CD4-positive, alpha-beta memory T cell (primary cell): ENCODE measurements at regions of chr22 and their contacts with region 1.

Region 1: GRCh38 chr22:50562523-50563412 is at the start of gene SYCE3:
- DNase-seq: peak; percentile 94 to 97 (median 95)
- H3K4me3 ChIP-seq: peak within 1 kb of the TSS; percentile 62 to 78
- H3K4me3 Mint-ChIP-seq: peak within 1 kb of the TSS; percentile 92 to 97 (median 95)
- H3K27ac ChIP-seq: peak within 1 kb of the TSS; percentile 55
- H3K27ac Mint-ChIP-seq: peak within 1 kb of the TSS; percentile 78 to 96 (median 91)
- H3K4me1 ChIP-seq: peaks cover 8% of the 10 kb centered on the region
- H3K4me1 Mint-ChIP-seq: peaks cover 13 to 25% (median 20%) of the 10 kb centered on the region in 4 donors
- H3K27me3 ChIP-seq: no peaks in the 10 kb centered on the region
- H3K27me3 Mint-ChIP-seq: peaks cover 0 to 2% of the 10 kb centered on the region in 2 donors
- total RNA-seq, gene SYCE3: not detected

Region 2: DNA sequence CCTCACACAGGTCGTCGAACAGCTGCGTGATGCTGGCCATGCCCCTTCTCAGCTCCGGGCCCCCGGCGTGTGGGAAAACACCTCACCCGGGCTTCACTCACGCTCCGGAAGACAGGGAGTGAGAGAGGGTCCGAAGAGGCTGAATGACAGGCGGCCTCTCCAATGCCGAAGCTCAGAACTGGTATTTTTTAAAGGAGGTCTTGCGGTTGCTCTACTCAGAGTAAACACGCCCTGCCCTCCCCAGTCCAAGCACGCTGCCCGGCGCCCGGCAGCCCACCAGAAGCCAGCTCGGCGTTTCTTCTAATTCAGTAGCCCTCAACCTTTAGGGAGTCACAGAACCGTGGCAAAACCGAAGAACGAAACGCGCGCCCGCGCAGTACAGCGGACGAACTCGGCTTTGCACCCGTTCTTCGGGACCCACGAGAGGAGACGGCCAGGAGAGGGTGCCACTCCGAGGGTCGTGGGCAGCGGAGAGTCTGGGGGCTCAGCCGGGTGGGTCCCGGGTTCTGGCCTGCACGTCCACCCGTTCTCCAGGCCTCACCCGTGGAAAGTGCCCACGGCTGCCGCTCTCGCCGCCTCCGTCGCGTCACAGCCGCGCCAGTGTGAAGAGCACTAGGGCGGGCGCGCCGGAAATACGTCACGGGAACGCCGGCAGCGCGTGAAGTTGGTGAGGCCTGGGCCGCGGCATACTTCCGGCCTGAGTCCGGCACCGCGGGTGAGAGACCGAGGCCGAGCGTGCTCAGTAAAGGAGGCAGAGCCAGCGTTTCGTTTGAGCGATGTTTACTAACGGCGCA is 318.2 kb before region 1 on chr22 and contains the start of gene TUBGCP6:
- CTCF ChIA-PET with region 1: no interaction called
- POLR2A ChIA-PET with region 1: interaction called, 3 read pairs
- intact Hi-C with region 1: loop called (anchors 1 kb)
- DNase-seq: peak; percentile 89 to 93 (median 91)
- H3K4me3 ChIP-seq: peak within 1 kb of the TSS; percentile 37 to 99
- H3K4me3 Mint-ChIP-seq: peak within 1 kb of the TSS; percentile 95 to 100 (median 98)
- H3K27ac ChIP-seq: peak within 1 kb of the TSS; percentile 98
- H3K27ac Mint-ChIP-seq: peak within 1 kb of the TSS; percentile 90 to 100 (median 99)
- H3K4me1 ChIP-seq: peaks cover 69% of the 10 kb centered on the region
- H3K4me1 Mint-ChIP-seq: peaks cover 23 to 64% (median 37%) of the 10 kb centered on the region in 4 donors
- H3K27me3 ChIP-seq: no peaks in the 10 kb centered on the region
- H3K27me3 Mint-ChIP-seq: no peaks in the 10 kb centered on the region
- total RNA-seq, gene TUBGCP6: 132 to 133 TPM

Region 3: GRCh38 chr22:50530877-50531545 is 31.8 kb before region 1 on chr22:
- CTCF ChIA-PET with region 1: interaction called, 33 read pairs
- POLR2A ChIA-PET with region 1: interaction called, 56 read pairs
- intact Hi-C with region 1: no loop called
- DNase-seq: peak; percentile 72 to 82 (median 77)
- H3K4me3 ChIP-seq: peak overlapping the region; percentile 76 to 94
- H3K4me3 Mint-ChIP-seq: peak overlapping the region; percentile 89 to 95 (median 92)
- H3K27ac ChIP-seq: peak overlapping the region; percentile 96
- H3K27ac Mint-ChIP-seq: peak overlapping the region; percentile 96 to 99 (median 97)
- H3K4me1 ChIP-seq: peaks cover 54% of the 10 kb centered on the region
- H3K4me1 Mint-ChIP-seq: peaks cover 15 to 54% (median 38%) of the 10 kb centered on the region in 4 donors
- H3K27me3 ChIP-seq: no peaks in the 10 kb centered on the region
- H3K27me3 Mint-ChIP-seq: no peaks in the 10 kb centered on the region

Region 4: DNA sequence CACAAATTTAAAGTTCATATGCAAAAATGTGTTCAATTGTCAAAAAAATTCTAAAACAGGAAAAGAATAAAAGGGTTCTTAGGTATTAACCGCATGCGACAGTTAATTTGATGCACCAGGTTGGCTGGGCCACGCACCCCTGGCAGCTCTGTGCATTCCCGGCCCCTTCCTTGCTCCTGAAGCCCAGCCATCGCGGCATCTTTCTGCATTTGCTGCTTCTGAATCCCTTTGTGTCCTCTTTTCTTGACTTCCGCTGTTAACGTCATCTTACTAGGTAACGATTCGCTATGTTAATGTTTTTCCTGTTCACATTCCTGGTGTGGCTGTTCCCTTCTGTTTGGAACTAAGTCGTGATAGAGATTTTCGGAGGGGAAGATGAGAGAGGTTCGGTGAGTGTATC is 25.0 kb before region 1 on chr22:
- CTCF ChIA-PET with region 1: interaction called, 9 read pairs
- POLR2A ChIA-PET with region 1: interaction called, 31 read pairs
- intact Hi-C with region 1: no loop called
- DNase-seq: no peak
- H3K4me3 ChIP-seq: no peak overlapping the region
- H3K4me3 Mint-ChIP-seq: peak overlapping the region in 6 of 8 donors; percentile 49 to 70 (median 60)
- H3K27ac ChIP-seq: peak overlapping the region; percentile 99
- H3K27ac Mint-ChIP-seq: peak overlapping the region; percentile 86 to 100 (median 96)
- H3K4me1 ChIP-seq: peaks cover 41% of the 10 kb centered on the region
- H3K4me1 Mint-ChIP-seq: peaks cover 25 to 61% (median 49%) of the 10 kb centered on the region in 4 donors
- H3K27me3 ChIP-seq: no peaks in the 10 kb centered on the region
- H3K27me3 Mint-ChIP-seq: no peaks in the 10 kb centered on the region

Region 5: DNA sequence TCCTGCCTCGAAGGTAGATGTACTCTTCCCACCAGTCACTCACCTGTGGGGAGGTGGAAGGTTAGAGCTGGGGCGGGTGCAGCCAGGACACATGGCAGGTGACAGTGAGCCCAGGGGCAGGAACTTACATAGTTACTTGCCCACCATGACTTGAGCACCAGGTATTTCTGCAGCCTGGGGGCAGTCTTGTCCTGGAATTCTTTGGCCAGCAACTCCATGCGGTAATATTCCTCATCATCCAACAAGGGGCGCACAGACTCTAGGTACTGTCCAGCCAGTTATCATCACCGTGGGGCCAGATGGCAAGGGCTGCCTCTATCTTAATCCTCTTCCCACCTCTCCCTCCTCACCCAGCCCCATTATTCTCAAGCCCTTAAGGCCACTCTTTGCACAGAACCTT is 13.3 kb after region 1 on chr22:
- CTCF ChIA-PET with region 1: interaction called, 10 read pairs
- POLR2A ChIA-PET with region 1: interaction called, 65 read pairs
- intact Hi-C with region 1: no loop called
- DNase-seq: no peak
- H3K4me3 ChIP-seq: no peak overlapping the region
- H3K4me3 Mint-ChIP-seq: no peak overlapping the region
- H3K27ac ChIP-seq: no peak overlapping the region
- H3K27ac Mint-ChIP-seq: no peak overlapping the region
- H3K4me1 ChIP-seq: peaks cover 8% of the 10 kb centered on the region
- H3K4me1 Mint-ChIP-seq: peaks cover 3 to 25% (median 10%) of the 10 kb centered on the region in 4 donors
- H3K27me3 ChIP-seq: no peaks in the 10 kb centered on the region
- H3K27me3 Mint-ChIP-seq: no peaks in the 10 kb centered on the region

Region 6: GRCh38 chr22:50582562-50583293 is 20.0 kb after region 1 on chr22 and contains the start of gene CHKB:
- CTCF ChIA-PET with region 1: interaction called, 10 read pairs
- POLR2A ChIA-PET with region 1: interaction called, 65 read pairs
- intact Hi-C with region 1: loop called (anchors 1 kb)
- DNase-seq: peak; percentile 98 to 99 (median 98)
- H3K4me3 ChIP-seq: peak within 1 kb of the TSS; percentile 63 to 91
- H3K4me3 Mint-ChIP-seq: peak within 1 kb of the TSS; percentile 90 to 96 (median 93)
- H3K27ac ChIP-seq: peak within 1 kb of the TSS; percentile 97
- H3K27ac Mint-ChIP-seq: peak within 1 kb of the TSS; percentile 91 to 98 (median 96)
- H3K4me1 ChIP-seq: peaks cover 21% of the 10 kb centered on the region
- H3K4me1 Mint-ChIP-seq: peaks cover 8 to 39% (median 16%) of the 10 kb centered on the region in 4 donors
- H3K27me3 ChIP-seq: no peaks in the 10 kb centered on the region
- H3K27me3 Mint-ChIP-seq: no peaks in the 10 kb centered on the region
- total RNA-seq, gene CHKB: 178 to 196 TPM